Endothelial cell of umbilical vein (primary cell): ENCODE measurements at regions of chr2 and their contacts with region 1.

Region 1: GRCh38 chr2:191030521-191031154 is 16.7 kb upstream of the STAT1 start:
- DNase-seq: peak; percentile 78
- H3K4me3 ChIP-seq: peak overlapping the region in 1 of 3 experiments; percentile 10
- H3K27ac ChIP-seq: peak overlapping the region; percentile 81
- H3K4me1 ChIP-seq: peaks cover 36% of the 10 kb centered on the region
- H3K27me3 ChIP-seq: no peaks in the 10 kb centered on the region
- CTCF ChIP-seq: peak; percentile 50 to 58
- POLR2A ChIP-seq: no peak

Region 2: DNA sequence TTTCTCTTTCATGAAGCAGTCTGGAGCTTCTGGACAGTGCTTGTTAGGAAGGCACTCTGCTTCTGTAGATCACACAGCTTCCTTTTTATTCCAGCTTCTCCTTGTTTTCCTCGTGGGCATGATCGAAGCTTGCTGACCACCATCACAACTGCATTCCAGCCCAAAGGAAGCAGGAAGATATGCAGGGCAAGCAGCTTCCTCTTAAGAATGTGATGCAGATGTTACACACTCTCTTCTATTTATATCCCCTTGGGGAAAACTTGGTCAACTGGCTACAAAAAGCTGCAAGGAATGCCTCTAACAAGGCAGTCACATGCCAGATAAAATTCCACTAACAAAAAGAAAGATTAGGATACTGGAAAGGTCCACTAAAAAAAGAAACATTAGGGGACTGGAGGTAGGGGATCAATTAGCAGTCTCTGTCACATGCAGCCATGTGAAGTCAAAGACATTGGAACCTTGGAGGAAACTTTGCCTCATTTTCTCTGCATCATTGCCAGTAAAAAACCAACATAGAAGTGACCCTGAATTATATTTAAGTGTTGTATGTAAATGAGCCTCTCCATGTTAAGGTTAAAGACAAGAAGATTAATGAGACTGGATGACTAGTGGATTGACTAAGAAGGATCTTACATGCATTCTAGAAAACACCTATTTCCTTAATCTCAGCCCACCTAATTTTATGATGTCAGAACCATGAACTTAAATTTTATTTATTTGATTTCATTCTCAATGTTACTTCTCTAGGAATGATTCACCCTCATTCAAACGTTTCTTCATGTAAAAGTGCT is 283.5 kb before region 1 on chr2:
- CTCF ChIA-PET with region 1: no interaction called
- POLR2A ChIA-PET with region 1: no interaction called
- dilution Hi-C with region 1: no loop called
- intact Hi-C with region 1: no loop called
- DNase-seq: peak; percentile 44
- H3K4me3 ChIP-seq: no peak overlapping the region
- H3K27ac ChIP-seq: peak overlapping the region; percentile 12
- H3K4me1 ChIP-seq: peaks cover 11% of the 10 kb centered on the region
- H3K27me3 ChIP-seq: peaks cover 0 to 3% of the 10 kb centered on the region in 2 experiments
- CTCF ChIP-seq: no peak
- POLR2A ChIP-seq: no peak

Region 3: GRCh38 chr2:190781604-190782198 is 248.9 kb before region 1 on chr2:
- CTCF ChIA-PET with region 1: interaction called, 3 read pairs
- POLR2A ChIA-PET with region 1: no interaction called
- dilution Hi-C with region 1: no loop called
- intact Hi-C with region 1: loop called (anchors 2 kb)
- DNase-seq: peak; percentile 76
- H3K4me3 ChIP-seq: no peak overlapping the region
- H3K27ac ChIP-seq: no peak overlapping the region
- H3K4me1 ChIP-seq: no peaks in the 10 kb centered on the region
- H3K27me3 ChIP-seq: peaks cover 0 to 2% of the 10 kb centered on the region in 2 experiments
- CTCF ChIP-seq: peak; percentile 36 to 53
- POLR2A ChIP-seq: no peak

Region 4: DNA sequence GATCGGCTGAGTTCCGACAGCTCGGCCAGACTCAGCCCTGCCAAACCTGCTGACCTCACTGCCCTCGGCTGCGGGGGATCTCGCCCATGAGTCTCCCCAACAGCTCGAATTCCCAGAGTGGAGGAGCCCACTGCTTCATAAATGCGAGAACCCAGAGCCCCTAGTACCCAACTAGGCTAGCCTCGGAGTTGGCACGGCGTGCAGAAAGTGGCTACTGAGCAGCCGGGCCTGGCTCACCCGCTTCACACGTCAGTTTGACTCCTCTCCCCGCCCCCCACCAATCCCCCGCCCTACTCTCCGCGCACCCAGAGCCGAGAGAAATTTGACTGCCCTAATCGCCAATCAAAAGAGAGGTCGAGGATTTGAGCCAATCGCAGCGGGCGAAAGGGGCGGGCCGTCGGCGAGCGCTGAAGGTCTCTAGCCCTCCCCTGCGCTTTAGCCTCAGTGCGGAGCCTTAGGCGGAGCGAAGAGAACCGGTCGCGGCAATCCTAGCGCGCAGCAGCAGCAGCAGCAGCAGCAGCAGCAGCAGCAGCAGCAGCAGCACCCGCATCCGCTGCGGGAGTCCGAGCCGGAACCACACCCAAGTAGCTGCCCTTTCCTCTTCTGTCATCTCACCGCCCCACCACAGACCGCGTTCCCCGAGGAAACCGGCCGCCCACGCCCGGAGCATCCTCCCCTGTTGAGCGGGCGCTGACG is 150.1 kb before region 1 on chr2 and contains the start of gene GLS:
- CTCF ChIA-PET with region 1: no interaction called
- POLR2A ChIA-PET with region 1: no interaction called
- dilution Hi-C with region 1: no loop called
- intact Hi-C with region 1: loop called (anchors 1 kb)
- DNase-seq: peak; percentile 98
- H3K4me3 ChIP-seq: peak within 1 kb of the TSS; percentile 80 to 99 (median 98)
- H3K27ac ChIP-seq: peak within 1 kb of the TSS; percentile 83
- H3K4me1 ChIP-seq: peaks cover 32% of the 10 kb centered on the region
- H3K27me3 ChIP-seq: no peaks in the 10 kb centered on the region
- CTCF ChIP-seq: no peak
- POLR2A ChIP-seq: peak; percentile 99
- total RNA-seq, gene GLS: 181 and 183 TPM in 2 replicates

Region 5: DNA sequence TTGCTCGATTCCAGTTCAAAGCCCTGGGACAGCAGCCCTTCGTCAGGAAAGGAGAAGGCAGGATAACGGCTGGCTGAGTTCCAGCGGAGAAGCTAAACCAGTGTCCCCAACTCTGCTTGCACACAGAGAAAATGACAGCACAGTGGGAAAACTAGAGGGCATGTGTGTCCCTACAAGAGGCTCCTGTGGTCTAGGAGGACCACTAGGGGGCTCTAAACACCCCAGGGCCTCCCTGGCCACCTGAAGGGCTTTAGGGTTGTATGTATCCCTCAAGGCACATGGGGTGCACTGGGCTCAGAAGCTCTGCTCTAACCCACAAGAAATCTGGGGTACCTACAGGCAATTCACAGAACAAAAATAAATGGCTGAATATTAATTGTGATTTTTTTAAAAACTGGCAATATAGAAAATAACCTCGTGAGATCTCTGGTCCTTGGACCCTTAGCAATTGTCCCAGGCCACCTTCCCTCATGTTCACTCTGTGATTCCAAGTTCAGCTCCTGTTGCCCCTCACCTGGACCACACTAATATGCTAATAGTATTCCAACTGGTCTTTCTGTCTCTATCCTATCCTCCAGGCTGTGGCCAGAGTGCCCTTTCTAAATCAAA is 34.2 kb before region 1 on chr2:
- CTCF ChIA-PET with region 1: no interaction called
- POLR2A ChIA-PET with region 1: no interaction called
- dilution Hi-C with region 1: no loop called
- intact Hi-C with region 1: loop called (anchors 1 kb)
- DNase-seq: peak; percentile 48
- H3K4me3 ChIP-seq: no peak overlapping the region
- H3K27ac ChIP-seq: no peak overlapping the region
- H3K4me1 ChIP-seq: no peaks in the 10 kb centered on the region
- H3K27me3 ChIP-seq: no peaks in the 10 kb centered on the region
- CTCF ChIP-seq: peak; percentile 74 to 86
- POLR2A ChIP-seq: no peak

Region 6: DNA sequence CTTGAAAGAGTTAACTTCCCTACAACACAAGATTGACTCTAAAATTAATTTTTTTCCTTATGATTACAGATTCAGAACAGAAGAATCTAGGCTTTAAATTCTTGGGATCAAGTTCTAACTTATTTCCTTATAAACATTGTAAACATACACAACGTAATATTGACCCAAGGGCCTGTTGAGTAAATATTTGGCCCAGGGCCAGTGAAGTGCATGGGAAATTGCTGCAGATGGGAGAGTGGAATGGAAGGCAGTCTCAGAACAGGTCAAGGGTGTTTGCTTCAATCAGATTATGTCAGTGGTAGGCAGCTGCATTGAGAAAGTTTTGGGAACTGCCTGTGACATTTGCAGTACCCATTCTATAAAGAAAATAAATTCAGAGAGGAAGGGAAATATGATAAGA is 352.2 kb after region 1 on chr2:
- CTCF ChIA-PET with region 1: no interaction called
- POLR2A ChIA-PET with region 1: no interaction called
- dilution Hi-C with region 1: no loop called
- intact Hi-C with region 1: loop called (anchors 10 kb)
- DNase-seq: peak; percentile 78
- H3K4me3 ChIP-seq: no peak overlapping the region
- H3K27ac ChIP-seq: peak overlapping the region; percentile 23
- H3K4me1 ChIP-seq: peaks cover 53% of the 10 kb centered on the region
- H3K27me3 ChIP-seq: no peaks in the 10 kb centered on the region
- CTCF ChIP-seq: no peak
- POLR2A ChIP-seq: no peak